ENCODE measurements at regions of chr4 and their contacts with region 1.

Region 1: GRCh38 chr4:70839589-70840093 is at the start of gene GRSF1:
- DNase-seq: peak; percentile 98
- H3K4me3 Mint-ChIP-seq: peak within 1 kb of the TSS; percentile 100
- H3K27ac Mint-ChIP-seq: peak within 1 kb of the TSS; percentile 99
- H3K4me1 Mint-ChIP-seq: peaks cover 35% of the 10 kb centered on the region
- H3K27me3 Mint-ChIP-seq: no peaks in the 10 kb centered on the region
- total RNA-seq, gene GRSF1: 122 and 124 TPM in 2 replicates

Region 2: GRCh38 chr4:70629469-70630090 is 210.1 kb before region 1 on chr4:
- intact Hi-C with region 1: loop called (anchors 10 kb)
- DNase-seq: peak; percentile 2
- H3K4me3 Mint-ChIP-seq: no peak overlapping the region
- H3K27ac Mint-ChIP-seq: no peak overlapping the region
- H3K4me1 Mint-ChIP-seq: no peaks in the 10 kb centered on the region
- H3K27me3 Mint-ChIP-seq: peaks cover 6% of the 10 kb centered on the region

Region 3: DNA sequence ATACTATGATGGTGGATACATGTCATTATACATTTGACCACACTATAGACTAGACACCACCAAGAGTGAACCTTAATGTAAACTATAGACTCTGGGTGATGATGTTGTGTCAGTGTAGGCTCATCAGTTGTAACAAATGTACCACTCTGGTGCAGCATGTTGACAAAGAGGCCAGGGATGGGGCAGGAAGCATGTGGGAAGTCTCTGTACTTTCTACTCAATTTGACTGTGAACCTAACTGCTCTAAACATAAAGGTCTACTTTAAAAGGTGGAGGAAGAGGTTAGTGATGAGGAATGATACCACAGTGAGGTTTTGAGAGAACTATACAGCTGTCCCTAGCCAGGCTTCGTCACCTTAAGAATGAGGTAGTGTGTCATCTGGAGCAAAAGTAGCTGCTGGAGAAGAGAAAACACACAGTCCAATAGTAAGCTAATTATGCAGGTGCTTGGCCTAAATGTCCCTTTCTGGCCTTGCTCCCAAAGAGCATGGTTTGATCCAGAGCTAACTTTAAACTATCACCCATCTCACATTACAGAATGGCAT is 38.3 kb before region 1 on chr4:
- intact Hi-C with region 1: loop called (anchors 5 kb)
- DNase-seq: peak; percentile 65
- H3K4me3 Mint-ChIP-seq: peak overlapping the region; percentile 21
- H3K27ac Mint-ChIP-seq: peak overlapping the region; percentile 74
- H3K4me1 Mint-ChIP-seq: peaks cover 16% of the 10 kb centered on the region
- H3K27me3 Mint-ChIP-seq: no peaks in the 10 kb centered on the region

Region 4: DNA sequence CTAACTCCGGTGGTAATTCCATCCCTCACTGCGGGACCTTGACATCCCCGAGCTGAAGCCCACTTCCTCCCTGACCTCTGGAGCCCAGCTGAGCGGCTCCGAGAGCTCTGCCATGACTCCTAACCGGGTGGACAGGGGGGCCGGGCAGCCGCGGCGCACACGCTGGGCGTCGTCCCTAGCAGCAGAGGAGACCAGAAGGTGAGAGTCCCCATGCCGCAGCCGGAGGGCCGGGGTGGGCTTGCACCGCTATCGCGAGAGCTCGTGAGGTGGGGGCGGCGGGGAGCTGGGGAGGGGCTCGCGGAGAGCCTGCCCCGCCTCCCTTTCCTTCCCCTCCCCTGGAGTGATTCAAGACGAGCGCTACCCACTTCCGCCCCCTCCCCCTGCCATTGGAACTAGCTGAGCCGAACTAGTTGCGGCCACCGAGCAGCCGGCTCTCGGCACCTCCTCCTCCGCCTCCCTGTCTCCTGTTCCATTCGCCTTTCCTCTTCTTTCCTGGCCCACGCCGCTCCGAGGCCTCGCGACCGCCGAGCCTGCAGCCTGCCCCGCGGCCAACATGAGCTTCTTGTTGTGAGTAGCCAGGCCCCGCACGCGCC is 62.4 kb after region 1 on chr4 and contains the start of gene MOB1B:
- intact Hi-C with region 1: loop called (anchors 1 kb)
- DNase-seq: peak; percentile 95
- H3K4me3 Mint-ChIP-seq: peak within 1 kb of the TSS; percentile 98
- H3K27ac Mint-ChIP-seq: peak within 1 kb of the TSS; percentile 92
- H3K4me1 Mint-ChIP-seq: peaks cover 18% of the 10 kb centered on the region
- H3K27me3 Mint-ChIP-seq: no peaks in the 10 kb centered on the region
- total RNA-seq, gene MOB1B: 23.1 and 24.1 TPM in 2 replicates

Region 5: DNA sequence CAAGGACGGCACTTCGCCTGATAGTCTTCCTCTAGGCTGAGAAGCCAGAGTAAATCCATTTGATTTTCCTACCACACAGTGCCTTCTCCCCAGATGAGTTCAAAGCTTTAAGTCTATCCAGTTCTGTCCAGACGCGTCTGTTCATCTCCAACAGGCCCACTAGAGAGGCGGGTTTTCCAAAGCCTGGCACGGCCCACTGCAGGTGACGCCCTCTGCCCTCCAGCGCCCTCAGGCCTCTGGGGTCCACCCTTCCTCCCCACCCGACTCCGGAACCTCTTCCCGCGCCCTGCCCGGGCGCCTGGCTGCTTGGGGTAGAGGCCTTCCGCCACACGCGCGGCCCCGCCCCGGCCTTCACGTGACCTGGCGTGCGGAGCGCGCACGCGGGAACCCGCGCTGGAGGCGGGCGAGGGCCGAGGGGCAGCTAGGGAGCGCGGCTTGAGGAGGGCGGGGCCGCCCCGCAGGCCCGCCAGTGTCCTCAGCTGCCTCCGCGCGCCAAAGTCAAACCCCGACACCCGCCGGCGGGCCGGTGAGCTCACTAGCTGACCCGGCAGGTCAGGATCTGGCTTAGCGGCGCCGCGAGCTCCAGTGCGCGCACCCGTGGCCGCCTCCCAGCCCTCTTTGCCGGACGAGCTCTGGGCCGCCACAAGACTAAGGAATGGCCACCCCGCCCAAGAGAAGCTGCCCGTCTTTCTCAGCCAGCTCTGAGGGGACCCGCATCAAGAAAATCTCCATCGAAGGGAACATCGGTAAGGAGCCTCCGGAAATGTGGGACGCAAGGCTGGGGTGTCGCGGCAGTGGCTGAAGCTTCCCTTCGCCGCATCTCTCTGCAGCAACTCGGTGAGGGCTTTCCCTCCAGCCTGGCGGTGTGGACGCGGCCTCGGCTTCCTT is 153.8 kb after region 1 on chr4 and contains the start of gene DCK:
- intact Hi-C with region 1: loop called (anchors 1 kb)
- DNase-seq: peak; percentile 96
- H3K4me3 Mint-ChIP-seq: peak within 1 kb of the TSS; percentile 99
- H3K27ac Mint-ChIP-seq: peak within 1 kb of the TSS; percentile 94
- H3K4me1 Mint-ChIP-seq: peaks cover 45% of the 10 kb centered on the region
- H3K27me3 Mint-ChIP-seq: no peaks in the 10 kb centered on the region
- total RNA-seq, gene DCK: 35.6 and 37.0 TPM in 2 replicates